CD8-positive, alpha-beta T cell (primary cell): ENCODE measurements at regions of chr2 and their contacts with region 1.

Region 1: GRCh38 chr2:34447097-34447496 is 848.0 kb upstream of the FAM98A start:
- DNase-seq: no peak
- ATAC-seq: no peak
- H3K4me3 ChIP-seq: no peak overlapping the region
- H3K4me3 Mint-ChIP-seq: no peak overlapping the region
- H3K27ac ChIP-seq: no peak overlapping the region
- H3K27ac Mint-ChIP-seq: no peak overlapping the region
- H3K4me1 ChIP-seq: no peaks in the 10 kb centered on the region
- H3K4me1 Mint-ChIP-seq: no peaks in the 10 kb centered on the region
- H3K27me3 ChIP-seq: no peaks in the 10 kb centered on the region
- H3K27me3 Mint-ChIP-seq: no peaks in the 10 kb centered on the region
- CTCF ChIP-seq: no peak

Region 2: GRCh38 chr2:33529771-33530351 is 917.2 kb before region 1 on chr2:
- CTCF ChIA-PET with region 1: no interaction called
- POLR2A ChIA-PET with region 1: no interaction called
- intact Hi-C with region 1: no loop called
- DNase-seq: no peak
- ATAC-seq: no peak
- H3K4me3 ChIP-seq: no peak overlapping the region
- H3K4me3 Mint-ChIP-seq: no peak overlapping the region
- H3K27ac ChIP-seq: no peak overlapping the region
- H3K27ac Mint-ChIP-seq: no peak overlapping the region
- H3K4me1 ChIP-seq: no peaks in the 10 kb centered on the region
- H3K4me1 Mint-ChIP-seq: peaks cover 2% of the 10 kb centered on the region
- H3K27me3 ChIP-seq: no peaks in the 10 kb centered on the region
- H3K27me3 Mint-ChIP-seq: no peaks in the 10 kb centered on the region
- CTCF ChIP-seq: no peak

Region 3: DNA sequence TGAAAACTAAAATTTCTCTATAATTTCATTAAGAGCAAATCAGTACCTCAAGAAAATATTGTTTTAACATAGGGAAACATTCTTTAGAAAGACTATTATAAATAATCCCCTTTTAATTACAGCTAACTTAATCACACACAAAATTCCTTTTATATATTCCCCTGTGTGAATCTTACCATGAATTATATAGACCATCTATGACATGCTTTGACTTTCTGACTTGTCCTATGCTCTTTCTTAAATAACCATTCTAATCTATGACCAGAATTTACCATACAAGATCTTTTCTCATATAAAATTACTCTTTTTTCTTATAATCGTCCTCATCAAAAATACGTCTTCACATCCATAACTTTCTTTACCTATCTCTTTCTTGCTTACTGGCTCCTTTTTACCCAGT is 23.8 kb before region 1 on chr2:
- CTCF ChIA-PET with region 1: no interaction called
- POLR2A ChIA-PET with region 1: no interaction called
- intact Hi-C with region 1: no loop called
- DNase-seq: no peak
- ATAC-seq: no peak
- H3K4me3 ChIP-seq: no peak overlapping the region
- H3K4me3 Mint-ChIP-seq: no peak overlapping the region
- H3K27ac ChIP-seq: no peak overlapping the region
- H3K27ac Mint-ChIP-seq: no peak overlapping the region
- H3K4me1 ChIP-seq: no peaks in the 10 kb centered on the region
- H3K4me1 Mint-ChIP-seq: no peaks in the 10 kb centered on the region
- H3K27me3 ChIP-seq: no peaks in the 10 kb centered on the region
- H3K27me3 Mint-ChIP-seq: no peaks in the 10 kb centered on the region
- CTCF ChIP-seq: no peak

Region 4: DNA sequence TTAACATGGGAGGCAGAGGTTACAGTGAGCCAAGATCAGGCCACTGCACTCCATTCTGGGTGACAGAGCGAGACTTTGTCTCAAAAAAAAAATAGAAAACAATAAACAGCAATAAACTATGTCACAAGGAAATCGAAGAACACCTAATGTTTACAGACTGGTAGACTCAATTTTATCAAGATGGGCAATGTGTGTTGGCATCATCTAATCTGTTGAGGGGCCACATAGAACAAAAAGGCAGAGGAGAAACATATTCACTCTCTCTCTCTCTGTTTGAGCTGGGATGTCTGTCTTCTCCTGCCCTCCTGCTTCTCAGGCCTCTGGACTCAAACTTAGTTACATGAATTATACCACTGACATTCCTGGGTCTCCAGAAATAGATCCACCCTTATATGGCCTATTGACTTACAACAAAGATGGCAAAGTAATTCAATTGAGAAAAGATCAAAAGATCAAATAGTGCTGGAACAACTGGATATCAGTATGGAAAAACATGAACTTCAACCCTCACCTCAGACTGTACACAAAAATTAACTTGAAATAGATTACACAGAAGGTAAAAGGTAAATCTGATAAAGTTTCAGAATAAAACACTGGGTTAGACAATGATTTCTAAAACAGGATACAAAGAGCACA is 1204.7 kb after region 1 on chr2:
- CTCF ChIA-PET with region 1: no interaction called
- POLR2A ChIA-PET with region 1: no interaction called
- intact Hi-C with region 1: loop called in 1 of 2 experiments (anchors 10 kb)
- DNase-seq: no peak
- ATAC-seq: no peak
- H3K4me3 ChIP-seq: no peak overlapping the region
- H3K4me3 Mint-ChIP-seq: no peak overlapping the region
- H3K27ac ChIP-seq: no peak overlapping the region
- H3K27ac Mint-ChIP-seq: no peak overlapping the region
- H3K4me1 ChIP-seq: no peaks in the 10 kb centered on the region
- H3K4me1 Mint-ChIP-seq: no peaks in the 10 kb centered on the region
- H3K27me3 ChIP-seq: no peaks in the 10 kb centered on the region
- H3K27me3 Mint-ChIP-seq: no peaks in the 10 kb centered on the region
- CTCF ChIP-seq: no peak